Activated T-helper 1 cell treated with anti-CD3 and anti-CD28 coated beads, Interleukin-12 subunit alpha, Interleukin-12 subunit beta, Interleukin-2, Interleukin-4 antibody, amounts not matched to agents 30 ng/mL and 10 ng/mL and 1 ng/mL, durations not matched to agents 14 hours and 24 hours and 36 hours (primary cell): ENCODE measurements at regions of chr12 and their contacts with region 1.

Region 1: DNA sequence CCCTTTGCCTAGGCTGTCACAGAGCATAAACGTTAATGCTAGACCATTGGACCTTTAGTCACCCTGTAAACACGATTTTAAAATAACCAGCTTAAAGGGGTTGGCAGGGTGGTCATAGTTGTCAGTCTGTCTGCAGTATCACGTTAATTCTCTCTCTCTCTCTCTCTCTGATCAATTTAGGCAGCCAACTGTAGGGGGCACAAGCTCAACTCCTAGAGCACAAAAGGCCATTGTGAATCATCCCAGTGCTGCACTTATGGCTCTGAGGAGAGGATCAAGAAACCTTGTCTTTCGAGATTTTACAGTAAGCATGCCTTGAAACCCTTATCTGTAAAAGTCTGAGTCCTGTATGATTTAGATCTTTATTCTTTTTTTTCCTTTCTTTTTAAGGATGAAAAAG is 97.1 kb downstream of the SCAF11 start:
- DNase-seq: no peak
- H3K4me3 Mint-ChIP-seq: no peak overlapping the region
- H3K27ac Mint-ChIP-seq: no peak overlapping the region
- H3K4me1 Mint-ChIP-seq: peaks cover 26% of the 10 kb centered on the region
- H3K27me3 Mint-ChIP-seq: no peaks in the 10 kb centered on the region

Region 2: DNA sequence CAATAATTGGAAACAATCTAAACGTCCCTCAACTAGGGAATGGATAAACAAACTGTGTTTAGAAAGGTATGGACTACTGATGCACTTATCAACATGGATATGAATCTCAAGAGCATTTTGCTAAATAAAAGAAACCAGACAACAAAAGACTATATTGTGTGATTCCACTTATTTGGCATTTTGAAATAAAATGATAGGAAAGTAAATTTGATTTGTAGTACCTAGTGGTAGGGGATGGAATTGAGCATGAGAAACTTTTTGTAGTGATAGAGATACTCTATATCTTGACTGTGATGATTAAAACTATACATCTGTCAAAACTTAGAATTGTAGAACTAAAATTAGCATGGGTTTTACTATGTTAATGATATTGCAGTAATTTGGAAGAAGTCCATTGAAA is 76.6 kb before region 1 on chr12:
- intact Hi-C with region 1: no loop called
- DNase-seq: no peak
- H3K4me3 Mint-ChIP-seq: no peak overlapping the region
- H3K27ac Mint-ChIP-seq: no peak overlapping the region
- H3K4me1 Mint-ChIP-seq: peaks cover 13% of the 10 kb centered on the region
- H3K27me3 Mint-ChIP-seq: no peaks in the 10 kb centered on the region

Region 3: GRCh38 chr12:45878630-45879255 is 14.5 kb before region 1 on chr12:
- intact Hi-C with region 1: loop called (anchors 2 kb)
- DNase-seq: peak; percentile 16
- H3K4me3 Mint-ChIP-seq: peak overlapping the region; percentile 46
- H3K27ac Mint-ChIP-seq: peak overlapping the region; percentile 82
- H3K4me1 Mint-ChIP-seq: peaks cover 66% of the 10 kb centered on the region
- H3K27me3 Mint-ChIP-seq: no peaks in the 10 kb centered on the region